ENCODE measurements at regions of chr6 and their contacts with region 1.

Region 1: DNA sequence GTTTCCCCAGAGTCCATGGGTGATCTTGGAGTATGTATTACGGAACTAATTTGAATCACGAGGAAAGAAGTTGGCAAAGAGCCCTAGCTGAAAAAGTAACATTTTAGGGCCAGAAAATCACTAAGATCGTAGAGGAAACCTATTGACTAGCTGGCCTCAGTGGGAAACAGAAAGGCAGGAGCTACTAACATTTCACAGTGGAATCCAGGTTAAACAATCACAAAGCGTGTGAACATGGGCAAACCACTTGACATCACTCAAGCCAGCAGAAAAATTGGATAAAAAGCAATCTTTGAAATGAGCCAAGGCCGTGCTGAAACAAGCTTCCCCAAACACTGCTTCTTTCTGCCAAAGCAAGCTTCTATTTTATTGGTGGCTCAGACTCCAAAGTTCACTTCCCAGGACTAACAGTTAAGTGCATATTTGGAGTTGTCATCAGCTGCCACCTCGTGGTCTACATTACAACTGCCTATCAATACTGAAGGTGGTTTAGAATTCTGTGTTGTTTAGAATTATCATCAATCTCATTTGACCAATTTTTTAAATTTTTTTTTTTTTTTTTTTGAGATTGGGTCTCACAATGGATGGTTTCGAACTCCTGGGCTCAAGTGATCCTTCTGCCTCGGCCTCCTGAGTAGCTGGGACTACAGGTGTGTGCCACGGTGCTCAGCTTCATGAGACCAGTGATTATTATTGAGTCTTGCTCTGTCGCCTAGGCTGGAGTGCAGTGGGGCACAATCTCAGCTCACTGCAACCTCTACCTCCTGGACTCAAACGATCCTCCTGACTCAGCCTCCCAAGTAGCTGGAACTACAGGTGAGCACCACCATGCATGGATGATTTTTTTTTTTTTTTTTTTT is 10.6 kb downstream of the RPS10 start:
- DNase-seq: no peak
- ATAC-seq: peak; percentile 85
- H3K4me3 ChIP-seq: no peak overlapping the region
- H3K27ac ChIP-seq: no peak overlapping the region
- H3K4me1 ChIP-seq: no peaks in the 10 kb centered on the region
- H3K27me3 ChIP-seq: no peaks in the 10 kb centered on the region
- CTCF ChIP-seq: peak; percentile 44 to 73 (median 65); a peak in 5 of 6 replicates
- EP300 ChIP-seq: no peak
- POLR2A ChIP-seq: no peak
- RAD21 ChIP-seq: peak; percentile 74

Region 2: DNA sequence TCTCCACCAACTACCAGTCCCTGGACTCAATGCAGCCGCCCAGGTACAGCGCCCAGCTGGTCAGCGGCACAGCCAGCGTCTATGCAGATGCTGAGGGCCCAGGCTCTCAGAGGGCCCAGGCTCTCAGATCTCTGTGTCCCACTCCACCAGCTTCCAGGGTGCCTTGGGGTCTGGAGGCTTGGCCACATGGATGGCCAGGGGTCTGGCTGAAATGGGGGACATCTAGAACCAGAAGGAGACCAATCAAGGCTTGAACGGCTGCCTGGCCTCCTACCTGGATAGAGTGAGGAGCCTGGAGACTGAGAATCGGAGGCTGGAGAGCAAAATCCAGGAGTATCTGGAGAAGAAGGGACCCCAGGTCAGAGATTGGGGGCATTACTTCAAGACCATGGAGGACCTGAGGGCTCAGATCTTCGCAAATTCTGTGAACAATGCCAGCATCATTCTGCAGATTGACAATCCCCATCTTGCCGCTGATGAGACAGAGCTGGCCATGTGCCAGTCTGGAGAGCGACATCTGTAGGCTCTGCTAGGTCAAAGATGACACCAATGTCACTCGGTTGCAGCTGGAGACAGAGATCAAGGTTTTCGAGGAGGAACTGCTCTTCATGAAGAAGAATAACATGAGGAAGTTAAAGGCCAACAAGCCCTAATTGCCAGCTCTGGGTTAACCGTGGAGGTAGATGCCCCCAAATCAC is 225.3 kb before region 1 on chr6:
- CTCF ChIA-PET with region 1: interaction called, 56 read pairs
- POLR2A ChIA-PET with region 1: no interaction called
- RAD21 ChIA-PET with region 1: interaction called, 3 read pairs
- SMC1A ChIA-PET with region 1: no interaction called
- in situ Hi-C with region 1: no loop called
- intact Hi-C with region 1: no loop called
- DNase-seq: no peak
- ATAC-seq: peak; percentile 56
- H3K4me3 ChIP-seq: no peak overlapping the region
- H3K27ac ChIP-seq: no peak overlapping the region
- H3K4me1 ChIP-seq: no peaks in the 10 kb centered on the region
- H3K27me3 ChIP-seq: no peaks in the 10 kb centered on the region
- CTCF ChIP-seq: peak in 2 of 3 experiments; percentile 5 to 22; a peak in 2 of 6 replicates
- EP300 ChIP-seq: no peak
- POLR2A ChIP-seq: no peak
- RAD21 ChIP-seq: 0 out of 2 replicates have a peak, but pooled peaks have one; percentile 17

Region 3: GRCh38 chr6:34248727-34249551 is 166.3 kb before region 1 on chr6 and contains the start of gene SMIM29:
- CTCF ChIA-PET with region 1: interaction called, 180 read pairs
- POLR2A ChIA-PET with region 1: interaction called, 41 read pairs
- RAD21 ChIA-PET with region 1: interaction called, 148 read pairs
- SMC1A ChIA-PET with region 1: interaction called, 152 read pairs
- in situ Hi-C with region 1: loop called (anchors 5 kb)
- intact Hi-C with region 1: loop called (anchors 1 kb)
- DNase-seq: peak; percentile 62
- ATAC-seq: peak; percentile 88
- H3K4me3 ChIP-seq: peak within 1 kb of the TSS; percentile 84
- H3K27ac ChIP-seq: peak within 1 kb of the TSS; percentile 78
- H3K4me1 ChIP-seq: peaks cover 19% of the 10 kb centered on the region
- H3K27me3 ChIP-seq: no peaks in the 10 kb centered on the region
- CTCF ChIP-seq: peak; percentile 82 to 86 (median 86)
- EP300 ChIP-seq: no peak
- POLR2A ChIP-seq: peak; percentile 91
- RAD21 ChIP-seq: peak; percentile 81
- polyA plus RNA-seq, gene SMIM29: 7.1 to 8.4 TPM

Region 4: DNA sequence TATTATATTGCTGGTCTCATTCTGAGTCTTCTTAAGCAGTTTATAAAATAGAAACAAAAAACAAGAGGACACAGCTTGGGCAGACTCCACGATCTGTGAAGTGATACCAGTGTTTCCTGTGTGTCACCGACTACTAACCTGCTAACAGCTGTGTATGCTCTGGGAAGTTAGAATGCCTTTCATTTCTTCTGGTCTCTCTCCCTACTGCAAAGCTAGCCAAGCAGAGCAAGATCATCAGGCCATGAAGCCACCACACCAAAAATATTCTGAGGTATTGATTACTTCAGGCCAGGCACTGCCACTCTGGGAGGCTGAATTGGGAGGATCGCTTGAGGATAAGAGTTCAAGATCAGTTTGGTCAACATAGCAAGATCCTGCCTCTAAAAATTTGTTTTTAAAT is 119.5 kb before region 1 on chr6:
- CTCF ChIA-PET with region 1: interaction called, 10 read pairs
- POLR2A ChIA-PET with region 1: no interaction called
- RAD21 ChIA-PET with region 1: interaction called, 5 read pairs
- SMC1A ChIA-PET with region 1: interaction called, 10 read pairs
- in situ Hi-C with region 1: no loop called
- intact Hi-C with region 1: no loop called
- DNase-seq: peak; percentile 95
- ATAC-seq: peak; percentile 95
- H3K4me3 ChIP-seq: 0 out of 2 replicates have a peak overlapping the region, but pooled peaks have one; percentile 4
- H3K27ac ChIP-seq: peak overlapping the region; percentile 76
- H3K4me1 ChIP-seq: peaks cover 40% of the 10 kb centered on the region
- H3K27me3 ChIP-seq: no peaks in the 10 kb centered on the region
- CTCF ChIP-seq: no peak
- EP300 ChIP-seq: no peak
- POLR2A ChIP-seq: no peak
- RAD21 ChIP-seq: no peak

Region 5: GRCh38 chr6:34386316-34387137 is 28.7 kb before region 1 on chr6:
- CTCF ChIA-PET with region 1: interaction called, 9 read pairs
- POLR2A ChIA-PET with region 1: interaction called, 12 read pairs
- RAD21 ChIA-PET with region 1: interaction called, 38 read pairs
- SMC1A ChIA-PET with region 1: interaction called, 5 read pairs
- in situ Hi-C with region 1: no loop called
- intact Hi-C with region 1: no loop called
- DNase-seq: no peak
- ATAC-seq: peak; percentile 14
- H3K4me3 ChIP-seq: no peak overlapping the region
- H3K27ac ChIP-seq: no peak overlapping the region
- H3K4me1 ChIP-seq: no peaks in the 10 kb centered on the region
- H3K27me3 ChIP-seq: no peaks in the 10 kb centered on the region
- CTCF ChIP-seq: no peak
- EP300 ChIP-seq: no peak
- POLR2A ChIP-seq: no peak
- RAD21 ChIP-seq: no peak

Region 6: GRCh38 chr6:34425498-34426410 is 10.5 kb after region 1 on chr6 and contains the start of gene RPS10:
- CTCF ChIA-PET with region 1: interaction called, 35 read pairs
- POLR2A ChIA-PET with region 1: interaction called, 8 read pairs
- RAD21 ChIA-PET with region 1: interaction called, 7 read pairs
- SMC1A ChIA-PET with region 1: interaction called, 39 read pairs
- in situ Hi-C with region 1: no loop called
- intact Hi-C with region 1: no loop called
- DNase-seq: peak; percentile 67
- ATAC-seq: peak; percentile 89
- H3K4me3 ChIP-seq: peak within 1 kb of the TSS; percentile 96
- H3K27ac ChIP-seq: peak within 1 kb of the TSS; percentile 96
- H3K4me1 ChIP-seq: peaks cover 6% of the 10 kb centered on the region; the same call in 1 of the 2 replicates
- H3K27me3 ChIP-seq: no peaks in the 10 kb centered on the region
- CTCF ChIP-seq: no peak
- EP300 ChIP-seq: peak; percentile 24 to 54; a peak in 1 of 4 replicates
- POLR2A ChIP-seq: peak; percentile 95
- RAD21 ChIP-seq: no peak
- polyA plus RNA-seq, gene RPS10: 2,067 to 2,394 TPM

Region 7: GRCh38 chr6:35139908-35140655 is 724.9 kb after region 1 on chr6:
- CTCF ChIA-PET with region 1: interaction called, 11 read pairs
- POLR2A ChIA-PET with region 1: no interaction called
- RAD21 ChIA-PET with region 1: no interaction called
- SMC1A ChIA-PET with region 1: interaction called, 5 read pairs
- in situ Hi-C with region 1: no loop called
- intact Hi-C with region 1: no loop called
- DNase-seq: peak; percentile 32
- ATAC-seq: peak; percentile 74
- H3K4me3 ChIP-seq: no peak overlapping the region
- H3K27ac ChIP-seq: no peak overlapping the region
- H3K4me1 ChIP-seq: peaks cover 3% of the 10 kb centered on the region; the same call in 1 of the 2 replicates
- H3K27me3 ChIP-seq: no peaks in the 10 kb centered on the region
- CTCF ChIP-seq: peak; percentile 68 to 89 (median 77)
- EP300 ChIP-seq: no peak
- POLR2A ChIP-seq: no peak
- RAD21 ChIP-seq: peak; percentile 95